ENCODE measurements at regions of chr3 and their contacts with region 1.

Region 1: DNA sequence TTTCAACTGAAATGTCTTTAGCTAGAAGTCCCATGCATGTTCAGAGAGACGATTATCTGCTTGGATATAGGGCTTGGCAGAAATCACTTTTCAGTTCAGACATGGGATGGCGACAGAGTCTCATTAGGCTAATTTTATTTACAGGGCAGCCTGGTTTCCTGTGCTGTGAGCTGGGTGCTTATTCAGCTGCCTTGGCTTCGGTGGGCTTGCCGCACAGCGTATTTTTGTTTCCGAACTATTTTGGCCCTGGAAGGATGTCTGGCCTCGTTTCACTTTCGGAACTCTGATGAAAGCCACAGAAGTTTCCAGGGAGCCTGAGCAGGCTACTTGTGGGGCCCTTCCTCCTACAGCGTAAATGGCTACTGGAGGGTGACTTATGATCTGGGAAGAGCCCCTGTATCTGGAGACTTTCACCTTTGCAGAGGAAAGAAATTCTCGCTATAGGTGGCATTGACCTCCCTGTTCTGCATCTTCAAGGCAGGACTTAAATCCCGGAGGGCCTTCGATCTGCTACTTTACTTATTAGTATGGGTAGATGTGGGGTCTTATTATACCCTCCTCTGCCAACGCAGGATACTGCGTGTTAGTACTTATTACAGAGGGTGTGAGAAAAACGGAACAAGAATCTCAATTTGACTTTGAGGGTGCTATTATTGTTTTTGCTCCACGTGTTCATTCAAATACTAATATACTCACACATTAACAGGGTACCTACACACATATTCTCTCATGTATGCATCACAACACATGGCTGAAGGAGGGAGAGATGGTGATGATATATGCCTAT is 364.0 kb upstream of the RBMS3 start:
- DNase-seq: peak; percentile 8
- H3K4me3 Mint-ChIP-seq: no peak overlapping the region
- H3K27ac Mint-ChIP-seq: no peak overlapping the region
- H3K4me1 Mint-ChIP-seq: no peaks in the 10 kb centered on the region
- H3K27me3 Mint-ChIP-seq: no peaks in the 10 kb centered on the region

Region 2: GRCh38 chr3:28726840-28727239 is 190.1 kb before region 1 on chr3:
- CTCF ChIA-PET with region 1: no interaction called
- POLR2A ChIA-PET with region 1: no interaction called
- intact Hi-C with region 1: no loop called
- DNase-seq: peak; percentile 17
- H3K4me3 Mint-ChIP-seq: no peak overlapping the region
- H3K27ac Mint-ChIP-seq: no peak overlapping the region
- H3K4me1 Mint-ChIP-seq: no peaks in the 10 kb centered on the region
- H3K27me3 Mint-ChIP-seq: no peaks in the 10 kb centered on the region

Region 3: DNA sequence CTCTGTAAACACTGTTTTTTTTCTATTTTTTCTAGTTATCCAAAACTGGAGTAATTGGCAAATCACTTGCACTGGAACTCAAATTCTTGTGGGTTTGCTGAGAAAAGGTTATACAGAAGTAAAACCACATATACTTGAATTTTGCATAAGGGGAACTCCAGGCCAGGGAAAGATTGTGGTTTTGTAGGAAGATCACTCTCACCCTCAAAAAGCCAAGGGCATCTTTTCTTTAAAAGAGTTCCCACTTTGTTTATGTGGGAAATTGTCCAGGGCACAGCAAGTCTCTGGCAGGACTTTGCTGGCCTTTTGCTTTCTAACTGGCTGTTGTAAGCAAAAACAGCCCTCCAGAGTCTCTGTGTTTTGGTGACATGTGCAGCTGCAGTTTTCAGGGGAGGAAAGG is 23.6 kb after region 1 on chr3:
- CTCF ChIA-PET with region 1: no interaction called
- POLR2A ChIA-PET with region 1: no interaction called
- intact Hi-C with region 1: no loop called
- DNase-seq: no peak
- H3K4me3 Mint-ChIP-seq: no peak overlapping the region
- H3K27ac Mint-ChIP-seq: no peak overlapping the region
- H3K4me1 Mint-ChIP-seq: no peaks in the 10 kb centered on the region
- H3K27me3 Mint-ChIP-seq: no peaks in the 10 kb centered on the region

Region 4: DNA sequence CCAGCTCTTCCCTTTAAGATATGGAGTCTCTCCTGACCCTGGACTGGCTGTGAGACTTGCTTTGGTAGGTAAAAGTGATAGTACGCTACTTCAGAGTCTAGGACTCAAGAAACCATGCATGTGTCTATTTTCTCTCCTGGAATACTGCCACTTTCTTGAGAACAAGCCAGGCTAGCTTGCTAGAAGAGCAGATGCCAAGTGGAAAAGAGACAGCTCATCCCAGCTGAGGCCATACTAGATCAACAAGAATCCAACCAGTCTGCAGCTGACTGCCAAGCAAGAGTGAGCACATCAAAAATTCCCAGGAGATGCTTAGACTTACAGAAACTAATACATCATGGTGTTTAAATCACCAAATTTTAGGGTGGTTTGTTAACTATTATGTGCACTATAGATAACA is 155.7 kb after region 1 on chr3:
- CTCF ChIA-PET with region 1: no interaction called
- POLR2A ChIA-PET with region 1: no interaction called
- intact Hi-C with region 1: no loop called
- DNase-seq: no peak
- H3K4me3 Mint-ChIP-seq: no peak overlapping the region
- H3K27ac Mint-ChIP-seq: no peak overlapping the region
- H3K4me1 Mint-ChIP-seq: no peaks in the 10 kb centered on the region
- H3K27me3 Mint-ChIP-seq: no peaks in the 10 kb centered on the region

Region 5: DNA sequence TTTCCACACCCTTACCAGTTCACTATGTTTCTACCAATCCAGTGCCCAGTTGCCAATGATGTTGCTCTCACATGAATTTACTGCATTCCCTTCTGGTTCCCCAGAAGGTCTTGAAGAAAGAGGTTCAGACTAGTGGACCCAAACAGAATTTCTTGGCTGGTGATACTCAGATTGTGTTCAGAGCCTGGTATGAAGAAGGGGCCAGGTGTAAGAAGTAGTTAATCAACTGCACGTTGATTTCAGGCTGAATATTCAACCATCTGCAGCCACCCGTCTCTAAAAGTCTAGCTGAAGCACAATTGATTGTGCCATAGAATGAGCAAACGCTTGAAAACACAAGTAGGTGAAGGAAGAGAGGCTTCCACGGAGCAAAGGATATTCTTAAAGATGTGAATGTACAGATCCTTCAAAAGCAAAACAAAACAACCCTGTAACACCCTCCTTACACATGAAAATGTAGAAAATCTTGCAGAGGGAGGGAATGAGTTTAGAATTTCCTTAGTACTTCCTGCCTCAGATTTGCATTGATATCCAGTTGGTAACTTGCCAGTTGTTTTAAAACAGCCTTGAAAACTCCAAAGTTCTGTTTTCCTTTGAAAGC is 368.7 kb after region 1 on chr3:
- CTCF ChIA-PET with region 1: interaction called, 3 read pairs
- POLR2A ChIA-PET with region 1: no interaction called
- intact Hi-C with region 1: loop called (anchors 5 kb)
- DNase-seq: no peak
- H3K4me3 Mint-ChIP-seq: no peak overlapping the region
- H3K27ac Mint-ChIP-seq: no peak overlapping the region
- H3K4me1 Mint-ChIP-seq: peaks cover 21% of the 10 kb centered on the region
- H3K27me3 Mint-ChIP-seq: peaks cover 10% of the 10 kb centered on the region

Region 6: DNA sequence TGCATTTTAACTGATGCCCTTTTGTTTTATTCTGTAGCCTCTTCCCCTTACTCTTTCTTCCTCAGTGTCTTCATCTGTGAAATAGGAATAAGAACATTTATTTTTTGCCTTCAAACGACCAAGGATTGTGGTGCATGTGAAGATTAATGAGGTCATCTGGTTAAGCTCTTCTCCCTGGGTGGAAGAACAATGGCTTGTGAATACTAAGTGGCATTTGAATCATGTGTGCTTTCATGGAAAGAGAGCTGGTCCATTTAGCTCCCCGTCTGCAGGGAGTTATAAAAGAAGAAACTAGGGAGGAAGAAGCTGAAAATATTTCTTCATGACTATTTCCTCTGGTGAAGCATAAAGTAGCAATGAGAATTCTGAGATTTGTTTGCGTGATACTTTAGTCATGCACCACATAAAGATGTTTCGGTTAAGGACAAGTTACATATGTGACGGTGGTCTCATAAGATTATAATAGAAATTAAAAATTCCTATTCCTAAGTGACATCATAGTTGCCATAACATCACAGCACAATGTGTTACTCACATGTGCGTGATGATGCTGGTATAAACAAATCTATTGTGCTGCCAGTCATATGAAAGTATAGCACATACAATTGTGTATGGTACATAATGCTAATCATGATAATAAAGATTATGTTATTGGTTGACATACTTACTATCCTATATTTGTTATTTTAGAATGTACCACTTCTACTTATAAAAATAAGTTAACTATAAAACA is 738.3 kb after region 1 on chr3:
- CTCF ChIA-PET with region 1: no interaction called
- POLR2A ChIA-PET with region 1: no interaction called
- intact Hi-C with region 1: no loop called
- DNase-seq: no peak
- H3K4me3 Mint-ChIP-seq: no peak overlapping the region
- H3K27ac Mint-ChIP-seq: no peak overlapping the region
- H3K4me1 Mint-ChIP-seq: no peaks in the 10 kb centered on the region
- H3K27me3 Mint-ChIP-seq: no peaks in the 10 kb centered on the region